ENCODE measurements at regions of chr7 and their contacts with region 1.

Region 1: GRCh38 chr7:27921081-27921836 is 181.3 kb downstream of the TAX1BP1 start:
- DNase-seq: peak; percentile 92
- ATAC-seq: peak; percentile 84
- H3K4me3 ChIP-seq: no peak overlapping the region
- H3K27ac ChIP-seq: no peak overlapping the region
- H3K4me1 ChIP-seq: peaks cover 19% of the 10 kb centered on the region
- H3K27me3 ChIP-seq: no peaks in the 10 kb centered on the region
- CTCF ChIP-seq: peak; percentile 74
- POLR2A ChIP-seq: no peak
- RAD21 ChIP-seq: peak; percentile 77

Region 2: GRCh38 chr7:27576360-27576944 is 344.8 kb before region 1 on chr7:
- CTCF ChIA-PET with region 1: no interaction called
- POLR2A ChIA-PET with region 1: interaction called, 4 read pairs
- dilution Hi-C with region 1: no loop called
- in situ Hi-C with region 1: no loop called
- intact Hi-C with region 1: loop called (anchors 1 kb)
- DNase-seq: peak; percentile 46
- ATAC-seq: peak; percentile 75
- H3K4me3 ChIP-seq: no peak overlapping the region
- H3K27ac ChIP-seq: no peak overlapping the region
- H3K4me1 ChIP-seq: peaks cover 2% of the 10 kb centered on the region; the same call in 1 of the 2 replicates
- H3K27me3 ChIP-seq: no peaks in the 10 kb centered on the region
- CTCF ChIP-seq: peak; percentile 66
- POLR2A ChIP-seq: no peak
- RAD21 ChIP-seq: peak; percentile 60

Region 3: GRCh38 chr7:27745064-27745583 is 176.1 kb before region 1 on chr7:
- CTCF ChIA-PET with region 1: interaction called, 5 read pairs
- POLR2A ChIA-PET with region 1: no interaction called
- dilution Hi-C with region 1: no loop called
- in situ Hi-C with region 1: no loop called
- intact Hi-C with region 1: loop called (anchors 2 kb)
- DNase-seq: peak; percentile 84
- ATAC-seq: peak; percentile 63
- H3K4me3 ChIP-seq: peak overlapping the region; percentile 5; the same call in 1 of the 2 replicates
- H3K27ac ChIP-seq: peak overlapping the region; percentile 1; the same call in 1 of the 2 replicates
- H3K4me1 ChIP-seq: peaks cover 8% of the 10 kb centered on the region; the same call in 1 of the 2 replicates
- H3K27me3 ChIP-seq: no peaks in the 10 kb centered on the region
- CTCF ChIP-seq: peak; percentile 80
- POLR2A ChIP-seq: no peak
- RAD21 ChIP-seq: peak; percentile 75

Region 4: DNA sequence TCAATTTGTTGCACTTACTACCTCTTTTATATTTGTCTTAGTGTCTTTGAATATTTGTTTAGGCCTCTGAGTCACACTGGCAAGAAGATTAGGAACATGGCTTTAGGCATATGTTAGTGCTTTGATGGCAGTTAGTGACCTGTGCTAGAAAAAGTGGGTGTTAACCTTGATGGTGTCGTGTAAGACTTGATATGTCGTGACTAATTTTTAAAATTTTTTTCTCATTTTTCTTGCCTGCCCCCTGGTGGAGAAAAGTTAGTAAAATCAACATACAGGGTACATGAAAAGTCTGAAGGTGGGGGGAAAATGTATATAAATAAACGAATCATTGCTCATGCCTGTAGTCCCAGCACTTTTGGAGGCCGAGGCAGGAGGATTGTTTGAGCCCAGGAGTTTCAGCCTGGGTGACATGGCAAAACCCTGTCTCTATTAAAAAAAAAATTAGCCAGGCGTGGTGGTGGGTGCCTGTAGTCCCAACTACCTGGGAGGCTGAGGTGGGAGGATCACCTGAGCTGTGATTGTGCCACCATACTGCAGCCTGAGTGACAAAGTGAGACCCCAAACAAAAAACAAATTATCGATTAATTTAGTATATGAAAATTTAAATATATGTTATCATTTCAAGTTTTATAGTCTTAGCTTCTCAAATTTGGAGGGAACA is 136.7 kb before region 1 on chr7:
- CTCF ChIA-PET with region 1: interaction called, 3 read pairs
- POLR2A ChIA-PET with region 1: no interaction called
- dilution Hi-C with region 1: no loop called
- in situ Hi-C with region 1: no loop called
- intact Hi-C with region 1: loop called (anchors 5 kb)
- DNase-seq: peak; percentile 70
- ATAC-seq: peak; percentile 66
- H3K4me3 ChIP-seq: no peak overlapping the region
- H3K27ac ChIP-seq: no peak overlapping the region
- H3K4me1 ChIP-seq: no peaks in the 10 kb centered on the region
- H3K27me3 ChIP-seq: no peaks in the 10 kb centered on the region
- CTCF ChIP-seq: peak; percentile 57
- POLR2A ChIP-seq: no peak
- RAD21 ChIP-seq: no peak

Region 5: GRCh38 chr7:28078036-28078901 is 157.0 kb after region 1 on chr7:
- CTCF ChIA-PET with region 1: no interaction called
- POLR2A ChIA-PET with region 1: no interaction called
- dilution Hi-C with region 1: no loop called
- in situ Hi-C with region 1: no loop called
- intact Hi-C with region 1: loop called (anchors 5 kb)
- DNase-seq: peak; percentile 62
- ATAC-seq: peak; percentile 83
- H3K4me3 ChIP-seq: no peak overlapping the region
- H3K27ac ChIP-seq: no peak overlapping the region
- H3K4me1 ChIP-seq: peaks cover 9% of the 10 kb centered on the region
- H3K27me3 ChIP-seq: no peaks in the 10 kb centered on the region
- CTCF ChIP-seq: peak; percentile 95
- POLR2A ChIP-seq: no peak
- RAD21 ChIP-seq: peak; percentile 79

Measured in IMR-90 (cell line).